Transverse colon (tissue), 4 donors: ENCODE measurements at regions of chr2 and their contacts with region 1.

Region 1: DNA sequence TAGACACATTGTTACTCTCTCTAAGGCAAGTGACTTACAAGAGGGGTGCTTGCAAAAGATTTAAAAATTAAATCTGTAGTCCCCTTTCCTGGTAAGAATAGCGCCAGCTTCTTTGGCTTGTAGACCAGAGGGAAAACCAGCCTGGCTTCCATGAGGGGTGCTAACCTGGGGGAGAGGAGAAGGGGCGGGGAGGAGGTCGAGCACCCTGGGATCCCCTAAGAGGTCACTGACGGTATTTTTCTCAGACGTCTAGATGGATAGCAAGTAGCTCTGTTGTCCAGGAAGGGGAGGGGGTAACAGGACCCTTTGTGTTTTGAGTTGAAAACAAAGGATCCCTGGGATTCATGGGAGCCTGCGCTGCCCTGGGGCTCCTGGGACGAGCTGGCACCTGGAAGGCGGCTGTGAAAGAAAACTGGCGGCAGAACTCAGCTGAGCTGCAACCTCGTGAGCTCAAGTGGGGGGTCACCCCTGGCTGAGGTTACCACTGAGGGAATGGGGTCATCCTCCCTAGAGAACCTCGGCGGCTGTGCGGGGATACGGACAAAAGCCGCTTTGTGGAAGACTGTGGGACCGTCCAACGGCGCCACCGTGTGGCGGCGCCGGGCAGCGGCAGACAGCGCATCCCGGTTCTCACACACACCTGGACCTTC is 37.8 kb upstream of the MRPL19 start:
- DNase-seq: peak; percentile 38
- H3K4me3 ChIP-seq: no peak overlapping the region
- H3K27ac ChIP-seq: no peak overlapping the region
- H3K4me1 ChIP-seq: peaks cover 3 to 4% (median 3%) of the 10 kb centered on the region in 4 donors
- H3K27me3 ChIP-seq: peaks cover 34% of the 10 kb centered on the region
- CTCF ChIP-seq: peak; percentile 66 to 93 (median 78)
- EP300 ChIP-seq: no peak
- POLR2A ChIP-seq: no peak

Region 2: GRCh38 chr2:74690571-74690970 is 918.2 kb before region 1 on chr2:
- in situ Hi-C with region 1: loop called in 1 of 4 experiments (anchors 25 kb)
- intact Hi-C with region 1: no loop called
- DNase-seq: no peak
- H3K4me3 ChIP-seq: no peak overlapping the region
- H3K27ac ChIP-seq: no peak overlapping the region
- H3K4me1 ChIP-seq: peaks cover 3 to 34% (median 20%) of the 10 kb centered on the region in 4 donors
- H3K27me3 ChIP-seq: no peaks in the 10 kb centered on the region
- CTCF ChIP-seq: peak; percentile 40 to 76 (median 65)
- EP300 ChIP-seq: no peak
- POLR2A ChIP-seq: no peak

Region 3: GRCh38 chr2:74919827-74920226 is 689.0 kb before region 1 on chr2:
- in situ Hi-C with region 1: loop called (anchors 25 kb)
- intact Hi-C with region 1: no loop called
- DNase-seq: peak; percentile 73
- H3K4me3 ChIP-seq: peak overlapping the region in 3 of 4 donors; percentile 22 to 38 (median 27)
- H3K27ac ChIP-seq: no peak overlapping the region
- H3K4me1 ChIP-seq: peaks cover 0 to 8% (median 2%) of the 10 kb centered on the region in 4 donors
- H3K27me3 ChIP-seq: peaks cover 9% of the 10 kb centered on the region
- CTCF ChIP-seq: peak; percentile 80 to 91 (median 87)
- EP300 ChIP-seq: no peak
- POLR2A ChIP-seq: no peak